ENCODE measurements at regions of chr7 and their contacts with region 1.

Region 1: GRCh38 chr7:31373337-31374289 is 33.1 kb upstream of the NEUROD6 start:
- DNase-seq: peak; percentile 85
- H3K4me3 ChIP-seq: no peak overlapping the region
- H3K27ac ChIP-seq: peak overlapping the region; percentile 10
- H3K4me1 ChIP-seq: peaks cover 9% of the 10 kb centered on the region
- H3K27me3 ChIP-seq: no peaks in the 10 kb centered on the region
- CTCF ChIP-seq: peak; percentile 85

Region 2: DNA sequence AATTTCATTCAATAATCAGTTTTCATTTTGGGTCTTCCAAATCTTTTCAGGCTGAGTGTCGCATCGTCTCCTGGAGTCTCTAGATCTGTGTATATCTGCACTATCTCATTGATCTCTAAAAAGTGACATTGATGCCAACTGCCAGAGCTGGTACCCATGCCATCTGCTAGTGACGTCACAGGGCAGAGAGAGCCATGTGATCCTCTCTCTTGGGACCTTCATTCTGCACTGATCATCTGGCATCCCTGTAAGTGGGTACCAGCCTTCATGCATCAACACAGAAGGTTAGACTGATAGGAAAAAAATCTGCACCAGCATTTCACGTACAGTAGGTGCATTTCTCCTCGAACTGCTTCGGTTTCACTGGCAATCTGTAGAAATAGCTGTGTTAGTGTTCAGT is 33.0 kb before region 1 on chr7 and contains the start of gene NEUROD6:
- CTCF ChIA-PET with region 1: no interaction called
- POLR2A ChIA-PET with region 1: no interaction called
- intact Hi-C with region 1: no loop called
- DNase-seq: no peak
- H3K4me3 ChIP-seq: no peak within 1 kb of the TSS
- H3K27ac ChIP-seq: peak within 1 kb of the TSS; percentile 88
- H3K4me1 ChIP-seq: peaks cover 63% of the 10 kb centered on the region
- H3K27me3 ChIP-seq: no peaks in the 10 kb centered on the region
- CTCF ChIP-seq: no peak
- total RNA-seq, gene NEUROD6: not detected in 2 replicates

Region 3: DNA sequence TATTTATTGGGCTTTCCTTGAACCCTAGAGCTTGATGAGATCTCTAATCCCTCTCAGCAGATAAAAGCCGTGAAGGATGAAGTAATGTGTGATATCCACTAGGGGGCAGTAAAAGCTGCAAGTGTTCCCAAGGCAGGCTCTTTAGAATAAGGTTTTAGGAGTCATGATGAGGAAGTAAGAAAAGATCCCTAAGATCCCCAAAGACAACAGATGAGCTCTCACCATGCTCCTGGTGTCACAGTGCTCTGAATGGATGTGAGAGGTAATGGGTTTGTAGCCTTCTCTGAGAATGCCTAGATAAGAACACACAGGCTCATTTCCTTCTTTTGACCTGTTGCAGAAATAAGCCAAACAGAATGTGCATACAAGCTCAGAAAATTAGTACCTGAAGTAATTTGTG is 69.8 kb after region 1 on chr7:
- CTCF ChIA-PET with region 1: interaction called, 9 read pairs
- POLR2A ChIA-PET with region 1: no interaction called
- intact Hi-C with region 1: loop called (anchors 10 kb)
- DNase-seq: peak; percentile 89
- H3K4me3 ChIP-seq: no peak overlapping the region
- H3K27ac ChIP-seq: peak overlapping the region; percentile 54
- H3K4me1 ChIP-seq: peaks cover 21% of the 10 kb centered on the region
- H3K27me3 ChIP-seq: no peaks in the 10 kb centered on the region
- CTCF ChIP-seq: peak; percentile 83

Region 4: GRCh38 chr7:31488562-31489203 is 115.1 kb after region 1 on chr7:
- CTCF ChIA-PET with region 1: no interaction called
- POLR2A ChIA-PET with region 1: no interaction called
- intact Hi-C with region 1: loop called (anchors 2 kb)
- DNase-seq: peak; percentile 83
- H3K4me3 ChIP-seq: no peak overlapping the region
- H3K27ac ChIP-seq: no peak overlapping the region
- H3K4me1 ChIP-seq: peaks cover 15% of the 10 kb centered on the region
- H3K27me3 ChIP-seq: no peaks in the 10 kb centered on the region
- CTCF ChIP-seq: peak; percentile 91

Region 5: DNA sequence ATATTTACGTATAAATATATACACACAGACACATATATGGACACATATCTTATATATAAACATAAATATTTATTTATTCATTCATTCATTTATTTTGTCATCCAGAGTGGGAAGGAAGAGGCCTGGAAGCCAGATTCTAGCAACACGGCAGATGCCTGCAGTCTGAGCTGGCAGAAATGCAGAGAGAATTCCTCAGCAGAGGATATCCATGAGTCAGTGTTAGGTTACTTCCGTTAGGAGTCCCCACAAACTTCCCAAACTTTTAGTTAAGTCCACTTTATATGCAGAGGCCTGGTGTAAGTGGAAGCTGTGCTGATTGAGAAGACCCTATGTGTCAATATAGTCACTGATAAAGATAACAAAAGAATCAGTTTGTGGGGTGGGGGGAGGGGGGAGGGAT is 403.0 kb after region 1 on chr7:
- CTCF ChIA-PET with region 1: no interaction called
- POLR2A ChIA-PET with region 1: no interaction called
- intact Hi-C with region 1: no loop called
- DNase-seq: no peak
- H3K4me3 ChIP-seq: no peak overlapping the region
- H3K27ac ChIP-seq: no peak overlapping the region
- H3K4me1 ChIP-seq: no peaks in the 10 kb centered on the region
- H3K27me3 ChIP-seq: peaks cover 63% of the 10 kb centered on the region
- CTCF ChIP-seq: no peak

Measured in A673 (cell line).